ENCODE measurements at regions of chr14 and their contacts with region 1.

Region 1: DNA sequence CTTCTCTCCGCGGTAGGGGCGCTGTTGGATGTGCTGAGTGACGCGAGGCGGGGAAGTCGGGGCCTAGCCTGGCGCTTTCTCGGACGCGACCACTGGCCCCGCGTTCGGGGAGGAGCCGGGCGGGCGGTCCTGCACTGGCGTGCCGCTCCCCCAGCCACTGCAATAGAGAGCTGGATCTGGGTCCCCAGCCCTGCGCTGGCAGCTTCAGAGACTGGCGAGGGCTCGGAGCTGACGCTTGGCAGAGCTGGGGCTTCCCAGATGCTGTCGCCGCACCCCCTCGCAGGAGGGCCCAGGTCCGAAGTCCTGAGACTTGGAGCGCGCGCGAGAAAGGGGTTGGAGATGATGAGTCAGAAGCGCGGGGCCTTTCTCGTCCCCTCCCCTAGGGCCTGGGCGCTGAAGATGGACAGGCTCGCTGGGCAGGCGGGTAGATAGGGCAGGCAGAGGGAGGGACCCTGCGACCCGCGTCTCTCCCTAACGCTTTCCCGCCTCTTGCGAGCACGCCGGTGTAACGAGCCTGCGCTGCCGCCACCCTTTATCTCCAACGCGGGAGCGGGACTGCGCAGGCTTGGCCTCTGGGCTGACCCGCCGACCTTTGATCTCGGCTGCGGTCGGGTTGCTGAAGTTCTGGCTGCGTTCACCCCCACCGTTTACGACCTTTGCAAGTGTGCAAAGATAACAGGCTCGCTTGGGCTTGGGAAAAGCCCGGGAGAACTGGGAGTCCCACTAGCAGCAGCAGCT is 3.0 kb downstream of the TMEM253 start:
- DNase-seq: peak; percentile 98
- ATAC-seq: peak; percentile 98
- H3K4me3 ChIP-seq: peak overlapping the region; percentile 23 to 75
- H3K27ac ChIP-seq: peak overlapping the region; percentile 58 to 96
- H3K4me1 ChIP-seq: no peaks in the 10 kb centered on the region
- H3K27me3 ChIP-seq: no peaks in the 10 kb centered on the region

Region 2: DNA sequence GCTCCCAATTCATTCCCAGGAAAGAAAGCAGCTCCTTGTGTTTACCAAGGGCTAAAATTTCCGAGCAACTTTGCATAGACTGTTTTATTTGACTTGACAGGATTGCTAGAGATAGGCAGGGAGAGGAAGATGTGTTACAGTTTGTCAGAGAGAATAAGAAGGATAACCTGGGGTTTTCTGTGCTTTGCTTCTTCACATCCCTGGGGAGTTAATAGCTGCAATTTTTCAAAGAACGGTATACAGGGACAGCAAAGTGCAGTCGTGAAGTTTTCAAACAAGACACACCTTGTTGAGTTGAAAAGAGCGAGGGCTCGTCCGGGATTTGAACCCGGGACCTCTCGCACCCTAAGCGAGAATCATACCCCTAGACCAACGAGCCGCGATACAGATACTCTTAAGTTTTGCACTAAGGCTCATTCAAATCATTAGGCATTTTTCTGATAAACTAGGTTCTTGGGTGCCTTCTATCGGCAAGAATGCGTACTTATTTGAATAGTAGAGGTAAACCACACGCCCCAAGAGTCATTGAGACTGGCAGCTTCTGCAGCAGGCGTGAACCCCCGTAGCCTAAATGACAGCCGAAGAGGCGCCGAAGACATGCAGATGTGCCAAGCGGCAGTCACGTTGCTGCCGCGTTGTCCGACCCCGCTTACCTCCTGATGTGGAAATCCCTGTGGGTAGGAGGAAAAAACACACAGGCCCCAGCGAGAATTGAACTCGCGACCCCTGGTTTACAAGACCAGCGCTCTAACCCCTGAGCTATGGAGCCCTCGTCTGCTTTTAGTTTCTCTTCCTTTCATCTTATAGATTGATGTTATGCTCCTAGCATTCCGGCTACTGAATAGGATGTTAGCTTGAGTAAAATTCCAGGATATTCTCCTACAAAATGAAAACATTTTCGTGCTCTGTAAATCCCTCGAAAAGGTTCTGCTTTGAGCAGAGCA is 490.5 kb before region 1 on chr14:
- intact Hi-C with region 1: no loop called
- DNase-seq: peak; percentile 88 to 89
- ATAC-seq: peak; percentile 90
- H3K4me3 ChIP-seq: peak overlapping the region; percentile 56 to 96
- H3K27ac ChIP-seq: peak overlapping the region in 1 of 2 donors; percentile 84
- H3K4me1 ChIP-seq: peaks cover 0 to 1% of the 10 kb centered on the region in 2 donors
- H3K27me3 ChIP-seq: no peaks in the 10 kb centered on the region

Region 3: DNA sequence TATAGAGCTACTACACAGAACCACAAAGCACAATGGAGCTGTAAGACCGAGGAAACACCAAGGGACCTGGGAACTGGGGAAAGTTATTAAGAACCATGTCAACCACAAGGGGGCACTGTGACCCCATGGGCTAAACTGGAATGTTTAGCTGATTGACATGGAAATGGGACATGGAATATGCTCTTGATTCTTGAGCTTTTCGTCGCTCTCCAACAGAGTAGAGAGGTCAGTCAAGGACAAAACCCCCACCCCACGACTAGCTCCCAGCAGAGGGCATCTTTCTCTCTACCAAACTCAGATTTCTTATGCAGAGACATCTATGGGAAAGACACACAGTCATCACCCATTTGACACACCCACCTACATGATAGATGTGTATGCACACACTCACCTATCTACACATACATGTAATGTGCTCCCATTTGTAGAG is 89.1 kb before region 1 on chr14:
- intact Hi-C with region 1: loop called (anchors 5 kb)
- DNase-seq: peak; percentile 87 to 90
- ATAC-seq: peak; percentile 88
- H3K4me3 ChIP-seq: no peak overlapping the region
- H3K27ac ChIP-seq: no peak overlapping the region
- H3K4me1 ChIP-seq: no peaks in the 10 kb centered on the region
- H3K27me3 ChIP-seq: no peaks in the 10 kb centered on the region

Region 4: DNA sequence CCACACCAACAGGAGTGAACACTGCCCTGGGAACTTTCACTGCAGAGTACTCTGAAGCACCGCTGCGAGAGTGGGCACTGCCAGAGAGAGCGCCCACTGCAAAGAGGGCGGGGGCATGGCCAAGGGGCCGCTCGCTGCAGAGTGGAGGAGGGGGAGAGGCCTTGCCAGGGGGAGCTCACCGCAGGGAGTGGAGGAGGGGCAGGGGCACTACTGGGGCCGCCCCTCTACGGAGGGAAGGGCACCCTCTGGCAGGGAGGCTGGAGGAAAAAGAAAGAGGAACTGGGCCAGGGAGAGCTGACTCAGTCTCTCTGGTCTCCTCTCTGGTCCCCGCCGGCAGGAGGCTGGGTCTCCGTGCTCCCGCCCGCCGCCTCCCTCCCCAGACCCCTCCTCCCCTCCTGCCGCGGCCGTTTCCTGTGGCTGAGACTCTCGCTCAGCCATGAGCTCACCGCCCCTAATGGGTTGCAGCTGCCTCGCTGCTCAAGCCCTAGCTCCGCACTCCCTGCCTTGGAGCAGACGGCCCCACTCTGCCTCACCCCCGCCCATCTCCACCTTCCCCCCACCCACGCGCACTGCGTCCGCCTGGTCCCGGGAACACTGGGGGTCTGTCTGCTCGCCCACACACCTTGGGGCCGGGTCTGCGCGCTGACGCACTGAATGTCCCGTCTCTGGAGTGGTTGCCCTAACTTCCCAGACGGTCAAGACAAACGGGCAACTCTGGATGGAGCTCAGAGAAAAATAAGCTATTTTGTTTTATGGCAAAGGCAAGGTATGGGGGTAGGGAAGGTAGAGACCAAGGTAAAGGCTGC is 32.5 kb before region 1 on chr14:
- intact Hi-C with region 1: loop called (anchors 1 to 2 kb)
- DNase-seq: peak; percentile 96
- ATAC-seq: peak; percentile 88
- H3K4me3 ChIP-seq: peak overlapping the region; percentile 51 to 63
- H3K27ac ChIP-seq: peak overlapping the region; percentile 34 to 49
- H3K4me1 ChIP-seq: no peaks in the 10 kb centered on the region
- H3K27me3 ChIP-seq: no peaks in the 10 kb centered on the region